ENCODE measurements at regions of chr1 and their contacts with region 1.

Region 1: GRCh38 chr1:169485544-169486278 is at the start of gene SLC19A2:
- DNase-seq: peak; percentile 98
- H3K4me3 Mint-ChIP-seq: peak within 1 kb of the TSS; percentile 98
- H3K27ac Mint-ChIP-seq: peak within 1 kb of the TSS; percentile 94
- H3K4me1 Mint-ChIP-seq: peaks cover 46% of the 10 kb centered on the region
- H3K27me3 Mint-ChIP-seq: no peaks in the 10 kb centered on the region
- total RNA-seq, gene SLC19A2: 12.1 and 12.2 TPM in 2 replicates

Region 2: DNA sequence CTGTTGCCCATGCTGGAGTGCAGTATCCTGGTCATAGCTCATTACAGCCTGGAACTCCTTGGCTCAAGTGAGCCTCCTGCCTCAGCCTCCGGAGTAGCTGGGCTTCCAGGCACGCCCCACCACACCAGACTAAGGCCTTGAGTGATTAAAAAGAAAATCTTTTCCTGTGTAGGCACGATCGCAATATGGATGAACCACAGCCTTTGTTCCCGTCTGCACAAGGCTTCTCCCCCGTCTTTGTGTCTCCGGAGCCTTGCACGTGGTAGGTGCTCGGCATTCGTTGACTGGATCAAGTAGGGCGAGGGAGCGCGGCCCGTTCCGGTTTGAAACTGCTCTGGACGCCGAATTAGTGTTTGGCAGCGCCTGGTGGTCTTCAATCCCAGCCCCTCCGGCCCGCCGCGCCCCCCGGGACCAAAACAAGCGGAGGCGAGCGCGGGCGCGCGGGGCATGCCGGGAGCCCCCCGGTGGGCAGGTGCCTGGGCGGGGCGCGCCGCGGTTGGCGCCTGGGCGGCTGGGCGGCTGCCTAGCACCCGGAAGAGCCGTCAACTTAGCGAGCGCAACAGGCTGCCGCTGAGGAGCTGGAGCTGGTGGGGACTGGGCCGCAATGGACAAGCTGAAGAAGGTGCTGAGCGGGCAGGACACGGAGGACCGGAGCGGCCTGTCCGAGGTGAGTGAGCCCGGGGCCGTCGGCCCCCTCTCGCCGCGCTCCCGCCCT is 1260.1 kb before region 1 on chr1 and contains the start of gene SFT2D2:
- intact Hi-C with region 1: loop called (anchors 5 kb)
- DNase-seq: peak; percentile 95
- H3K4me3 Mint-ChIP-seq: peak within 1 kb of the TSS; percentile 84
- H3K27ac Mint-ChIP-seq: peak within 1 kb of the TSS; percentile 95
- H3K4me1 Mint-ChIP-seq: peaks cover 50% of the 10 kb centered on the region
- H3K27me3 Mint-ChIP-seq: no peaks in the 10 kb centered on the region
- total RNA-seq, gene SFT2D2: 64.3 and 65.7 TPM in 2 replicates

Region 3: GRCh38 chr1:169390303-169390702 is 95.4 kb before region 1 on chr1:
- intact Hi-C with region 1: loop called (anchors 2 kb)
- DNase-seq: no peak
- H3K4me3 Mint-ChIP-seq: no peak overlapping the region
- H3K27ac Mint-ChIP-seq: peak overlapping the region; percentile 16
- H3K4me1 Mint-ChIP-seq: peaks cover 10% of the 10 kb centered on the region
- H3K27me3 Mint-ChIP-seq: no peaks in the 10 kb centered on the region

Region 4: GRCh38 chr1:169460191-169460833 is 25.4 kb before region 1 on chr1:
- intact Hi-C with region 1: loop called (anchors 2 kb)
- DNase-seq: peak; percentile 75
- H3K4me3 Mint-ChIP-seq: peak overlapping the region; percentile 62
- H3K27ac Mint-ChIP-seq: peak overlapping the region; percentile 2
- H3K4me1 Mint-ChIP-seq: peaks cover 16% of the 10 kb centered on the region
- H3K27me3 Mint-ChIP-seq: peaks cover 4% of the 10 kb centered on the region

Region 5: DNA sequence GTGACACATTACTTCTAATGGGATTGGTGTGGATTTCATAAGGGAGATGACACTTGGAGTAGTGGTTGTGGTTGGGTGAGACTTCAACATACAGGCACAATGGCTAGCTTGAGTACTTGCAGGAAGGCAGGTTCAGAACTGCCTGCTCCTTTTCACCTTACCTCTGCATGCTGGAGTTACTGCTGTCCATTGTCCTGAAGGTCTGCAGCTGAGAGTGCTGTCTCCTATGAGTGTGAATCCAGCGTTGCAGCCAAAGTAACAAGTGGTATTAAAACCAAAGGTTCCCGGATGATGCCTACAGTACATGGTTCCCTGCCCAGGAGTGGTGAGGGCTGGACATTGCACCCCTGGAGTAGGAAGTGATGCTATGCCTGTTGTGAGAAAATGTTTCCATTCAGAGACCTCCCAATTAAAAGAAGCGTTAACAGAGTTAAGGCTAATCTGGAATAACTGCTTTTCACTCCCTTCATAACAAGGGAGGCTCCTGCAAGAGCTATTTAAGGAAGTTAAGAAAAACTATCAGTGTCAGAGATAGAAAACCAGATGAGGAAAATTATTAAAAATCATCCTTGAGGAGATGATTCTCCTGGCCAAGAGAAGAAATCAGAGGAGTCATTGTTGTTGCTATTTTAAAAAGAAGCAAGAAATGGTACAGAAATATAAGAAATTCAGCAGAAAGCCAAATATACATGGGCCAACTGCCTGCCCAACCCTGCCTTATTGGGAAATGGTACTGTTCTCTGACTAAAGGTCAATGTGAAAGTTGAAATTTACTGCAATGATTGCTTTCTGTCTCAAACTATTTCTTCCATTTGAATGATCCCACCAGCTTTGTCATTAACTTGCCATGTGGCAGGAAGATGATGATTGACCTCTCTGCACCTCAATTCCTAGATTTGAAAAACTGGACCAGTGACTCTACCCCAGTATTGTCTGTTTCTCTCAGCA is 110.3 kb after region 1 on chr1:
- intact Hi-C with region 1: loop called (anchors 2 kb)
- DNase-seq: peak; percentile 78
- H3K4me3 Mint-ChIP-seq: no peak overlapping the region
- H3K27ac Mint-ChIP-seq: no peak overlapping the region
- H3K4me1 Mint-ChIP-seq: peaks cover 48% of the 10 kb centered on the region
- H3K27me3 Mint-ChIP-seq: peaks cover 5% of the 10 kb centered on the region

Measured in activated CD4-positive, alpha-beta T cell treated with anti-CD3 and anti-CD28 coated beads, Interleukin-2, amount 10 ng/mL, durations not matched to agents 24 days and 14 days (primary cell).